ENCODE measurements at regions of chrX and their contacts with region 1.

Region 1: DNA sequence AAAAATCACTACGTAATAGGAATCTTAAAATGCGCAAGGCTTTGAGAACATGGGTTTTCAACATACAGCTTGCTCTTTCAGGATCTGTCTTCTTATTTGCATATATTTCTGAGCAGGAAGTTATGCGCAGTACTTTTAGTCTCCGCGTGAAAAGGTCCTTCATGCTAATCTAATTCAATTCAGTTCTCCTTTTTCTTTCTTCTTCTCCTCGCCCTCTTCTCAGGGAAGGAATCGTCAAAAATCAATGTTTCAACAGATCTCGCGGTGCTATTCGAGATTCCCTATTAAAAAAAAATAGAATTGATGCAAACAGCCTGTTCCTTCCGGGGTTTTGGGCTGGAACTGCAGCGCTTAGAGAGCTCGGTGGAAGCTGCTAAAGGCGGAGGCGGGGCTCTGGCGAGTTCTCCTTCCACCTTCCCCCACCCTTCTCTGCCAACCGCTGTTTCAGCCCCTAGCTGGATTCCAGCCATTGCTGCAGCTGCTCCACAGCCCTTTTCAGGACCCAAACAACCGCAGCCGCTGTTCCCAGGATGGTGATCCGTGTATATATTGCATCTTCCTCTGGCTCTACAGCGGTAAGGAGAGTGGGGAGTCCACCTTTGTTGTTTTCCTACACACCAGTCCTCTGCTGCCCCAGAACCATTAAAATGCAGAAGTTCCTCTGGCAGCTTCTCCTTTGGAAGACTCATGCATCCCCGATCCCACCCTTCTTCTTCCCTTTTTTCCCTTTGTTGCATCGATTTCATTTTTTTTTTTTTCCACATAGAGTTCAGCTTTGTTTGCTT is at the starts of genes HMGN5 and SH3BGRL:
- DNase-seq: peak; percentile 88
- ATAC-seq: peak; percentile 97
- H3K4me3 ChIP-seq: peak within 1 kb of the TSS; percentile 58
- H3K27ac ChIP-seq: peak within 1 kb of the TSS; percentile 98
- H3K4me1 ChIP-seq: no peaks in the 10 kb centered on the region
- H3K27me3 ChIP-seq: no peaks in the 10 kb centered on the region
- CTCF ChIP-seq: no peak
- POLR2A ChIP-seq: no peak
- RAD21 ChIP-seq: no peak
- total RNA-seq, gene HMGN5: 0.72 and 0.83 TPM in 2 replicates
- total RNA-seq, gene SH3BGRL: 50.7 and 53.0 TPM in 2 replicates

Region 2: GRCh38 chrX:80747832-80748231 is 454.0 kb before region 1 on chrX:
- CTCF ChIA-PET with region 1: no interaction called
- POLR2A ChIA-PET with region 1: no interaction called
- dilution Hi-C with region 1: no loop called
- in situ Hi-C with region 1: no loop called
- intact Hi-C with region 1: no loop called
- DNase-seq: peak; percentile 16
- ATAC-seq: no peak
- H3K4me3 ChIP-seq: no peak overlapping the region
- H3K27ac ChIP-seq: no peak overlapping the region
- H3K4me1 ChIP-seq: no peaks in the 10 kb centered on the region
- H3K27me3 ChIP-seq: no peaks in the 10 kb centered on the region
- CTCF ChIP-seq: no peak
- POLR2A ChIP-seq: no peak
- RAD21 ChIP-seq: no peak

Region 3: DNA sequence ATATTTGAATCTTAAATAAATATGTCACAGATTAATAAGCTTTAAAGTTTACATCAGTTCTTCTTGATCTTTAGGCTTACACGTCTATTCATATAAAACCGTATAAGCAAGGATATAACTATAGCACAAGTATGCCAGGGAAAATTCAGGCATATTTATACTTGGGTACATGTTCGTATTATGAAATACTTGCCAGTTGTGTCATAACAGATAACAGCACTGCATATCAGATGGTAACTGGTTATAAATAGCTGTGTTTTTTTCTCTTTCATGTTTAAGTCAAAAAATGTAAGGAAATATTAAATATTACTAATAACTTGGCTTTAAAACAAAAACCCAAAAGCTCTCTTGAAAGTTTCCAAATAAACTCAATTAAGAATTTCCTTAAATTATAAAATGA is 409.7 kb before region 1 on chrX:
- CTCF ChIA-PET with region 1: no interaction called
- POLR2A ChIA-PET with region 1: no interaction called
- dilution Hi-C with region 1: no loop called
- in situ Hi-C with region 1: no loop called
- intact Hi-C with region 1: no loop called
- DNase-seq: peak; percentile 19
- ATAC-seq: no peak
- H3K4me3 ChIP-seq: no peak overlapping the region
- H3K27ac ChIP-seq: no peak overlapping the region
- H3K4me1 ChIP-seq: no peaks in the 10 kb centered on the region
- H3K27me3 ChIP-seq: no peaks in the 10 kb centered on the region
- CTCF ChIP-seq: no peak
- POLR2A ChIP-seq: no peak
- RAD21 ChIP-seq: no peak

Region 4: GRCh38 chrX:81259020-81259713 is 57.3 kb after region 1 on chrX:
- CTCF ChIA-PET with region 1: interaction called, 3 read pairs
- POLR2A ChIA-PET with region 1: interaction called, 3 read pairs
- dilution Hi-C with region 1: no loop called
- in situ Hi-C with region 1: no loop called
- intact Hi-C with region 1: loop called (anchors 1 kb)
- DNase-seq: peak; percentile 67
- ATAC-seq: peak; percentile 82
- H3K4me3 ChIP-seq: no peak overlapping the region
- H3K27ac ChIP-seq: peak overlapping the region; percentile 54; the same call in 1 of the 2 replicates
- H3K4me1 ChIP-seq: 0 out of 2 replicates have a peak, but pooled peaks cover 2% of the 10 kb centered on the region
- H3K27me3 ChIP-seq: no peaks in the 10 kb centered on the region
- CTCF ChIP-seq: no peak
- POLR2A ChIP-seq: no peak
- RAD21 ChIP-seq: no peak

Region 5: DNA sequence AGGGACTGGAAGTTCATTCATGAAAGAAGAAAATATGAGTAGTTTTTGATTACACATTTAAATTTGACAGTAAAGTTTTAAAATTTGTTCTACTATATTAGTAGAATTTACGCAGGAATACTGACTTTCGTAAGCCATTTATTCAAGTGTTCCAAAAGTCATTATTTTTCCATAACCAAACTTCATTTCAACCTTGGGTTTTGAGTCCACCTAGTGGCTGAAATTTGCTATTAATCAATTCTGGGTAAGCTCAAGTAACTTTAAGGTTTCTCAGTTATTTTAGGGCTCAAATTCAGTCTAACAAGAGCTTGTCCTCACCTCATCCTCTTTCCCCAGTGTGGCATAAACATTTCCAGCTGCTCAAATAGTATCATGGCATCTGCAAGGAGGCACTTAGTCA is 175.5 kb after region 1 on chrX:
- CTCF ChIA-PET with region 1: interaction called, 12 read pairs
- POLR2A ChIA-PET with region 1: no interaction called
- dilution Hi-C with region 1: no loop called
- in situ Hi-C with region 1: no loop called
- intact Hi-C with region 1: no loop called
- DNase-seq: peak; percentile 27
- ATAC-seq: no peak
- H3K4me3 ChIP-seq: no peak overlapping the region
- H3K27ac ChIP-seq: no peak overlapping the region
- H3K4me1 ChIP-seq: no peaks in the 10 kb centered on the region
- H3K27me3 ChIP-seq: no peaks in the 10 kb centered on the region
- CTCF ChIP-seq: peak; percentile 62
- POLR2A ChIP-seq: no peak
- RAD21 ChIP-seq: peak; percentile 61